A673 (cell line): ENCODE measurements at regions of chr7 and their contacts with region 1.

Region 1: DNA sequence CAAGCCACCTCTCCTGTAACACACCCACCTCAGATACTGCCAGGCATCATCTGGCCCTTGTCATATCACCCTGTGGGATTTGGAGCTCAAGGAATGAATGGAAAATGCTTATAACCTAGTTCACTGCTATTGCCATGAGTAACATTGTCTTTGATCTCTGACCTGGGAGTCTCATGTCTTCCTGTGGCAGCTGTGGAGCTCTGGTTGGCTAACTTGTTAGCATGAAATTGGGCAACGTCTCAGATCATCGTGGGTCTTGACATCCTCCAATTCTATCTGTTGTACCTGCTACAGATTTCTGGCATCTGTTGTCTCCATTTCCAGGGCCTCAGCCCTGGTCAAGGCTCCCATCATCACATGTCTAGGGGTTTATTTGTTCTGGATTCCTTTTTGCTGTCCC is 2.2 kb upstream of the TMEM270 start:
- DNase-seq: no peak
- H3K4me3 ChIP-seq: no peak overlapping the region
- H3K27ac ChIP-seq: no peak overlapping the region
- H3K4me1 ChIP-seq: no peaks in the 10 kb centered on the region
- H3K27me3 ChIP-seq: no peaks in the 10 kb centered on the region
- CTCF ChIP-seq: no peak

Region 2: GRCh38 chr7:73768642-73769535 is 89.9 kb before region 1 on chr7:
- CTCF ChIA-PET with region 1: no interaction called
- POLR2A ChIA-PET with region 1: no interaction called
- intact Hi-C with region 1: no loop called
- DNase-seq: no peak
- H3K4me3 ChIP-seq: no peak overlapping the region
- H3K27ac ChIP-seq: no peak overlapping the region
- H3K4me1 ChIP-seq: no peaks in the 10 kb centered on the region
- H3K27me3 ChIP-seq: peaks cover 25% of the 10 kb centered on the region
- CTCF ChIP-seq: no peak

Region 3: GRCh38 chr7:73779517-73779916 is 79.3 kb before region 1 on chr7:
- CTCF ChIA-PET with region 1: no interaction called
- POLR2A ChIA-PET with region 1: no interaction called
- intact Hi-C with region 1: no loop called
- DNase-seq: no peak
- H3K4me3 ChIP-seq: no peak overlapping the region
- H3K27ac ChIP-seq: no peak overlapping the region
- H3K4me1 ChIP-seq: no peaks in the 10 kb centered on the region
- H3K27me3 ChIP-seq: no peaks in the 10 kb centered on the region
- CTCF ChIP-seq: no peak

Region 4: DNA sequence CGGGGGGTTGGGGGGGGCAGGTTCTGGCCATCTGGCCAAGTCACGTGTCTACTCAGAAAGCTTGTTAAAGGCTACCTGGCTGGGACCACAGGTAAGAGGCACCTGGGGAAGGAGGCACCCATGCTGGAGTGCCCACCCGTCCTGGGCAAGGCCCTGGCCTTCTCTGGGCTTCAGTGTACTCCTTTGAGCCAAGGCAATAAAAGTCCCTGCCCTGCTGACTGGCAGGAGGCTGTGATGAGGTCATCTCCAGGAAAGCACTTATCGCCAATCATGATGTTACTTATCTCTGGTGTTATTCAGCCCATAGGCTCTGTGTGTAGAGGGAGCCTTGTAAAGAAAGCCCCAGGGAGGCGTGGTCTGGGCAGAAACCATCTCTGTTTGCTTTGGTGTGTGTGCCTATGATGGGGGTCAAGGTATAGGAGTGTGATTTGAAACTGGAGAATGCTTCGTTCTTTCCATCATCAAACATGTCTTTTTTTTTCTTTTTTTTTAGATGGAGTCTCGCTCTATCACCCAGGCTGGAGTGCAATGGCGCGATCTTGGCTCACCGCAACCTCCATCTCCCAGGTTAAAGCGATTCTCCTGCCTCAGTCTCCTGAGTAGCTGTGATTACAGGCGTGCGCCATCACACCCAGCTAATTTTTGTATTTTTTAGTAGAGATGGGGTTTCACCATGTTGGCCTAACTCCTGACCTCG is 30.6 kb before region 1 on chr7:
- CTCF ChIA-PET with region 1: no interaction called
- POLR2A ChIA-PET with region 1: no interaction called
- intact Hi-C with region 1: no loop called
- DNase-seq: peak; percentile 54
- H3K4me3 ChIP-seq: no peak overlapping the region
- H3K27ac ChIP-seq: no peak overlapping the region
- H3K4me1 ChIP-seq: no peaks in the 10 kb centered on the region
- H3K27me3 ChIP-seq: no peaks in the 10 kb centered on the region
- CTCF ChIP-seq: no peak

Region 5: GRCh38 chr7:73876973-73877372 is 18.2 kb after region 1 on chr7:
- CTCF ChIA-PET with region 1: no interaction called
- POLR2A ChIA-PET with region 1: no interaction called
- intact Hi-C with region 1: no loop called
- DNase-seq: no peak
- H3K4me3 ChIP-seq: no peak overlapping the region
- H3K27ac ChIP-seq: no peak overlapping the region
- H3K4me1 ChIP-seq: peaks cover 4% of the 10 kb centered on the region
- H3K27me3 ChIP-seq: peaks cover 16% of the 10 kb centered on the region
- CTCF ChIP-seq: no peak

Region 6: DNA sequence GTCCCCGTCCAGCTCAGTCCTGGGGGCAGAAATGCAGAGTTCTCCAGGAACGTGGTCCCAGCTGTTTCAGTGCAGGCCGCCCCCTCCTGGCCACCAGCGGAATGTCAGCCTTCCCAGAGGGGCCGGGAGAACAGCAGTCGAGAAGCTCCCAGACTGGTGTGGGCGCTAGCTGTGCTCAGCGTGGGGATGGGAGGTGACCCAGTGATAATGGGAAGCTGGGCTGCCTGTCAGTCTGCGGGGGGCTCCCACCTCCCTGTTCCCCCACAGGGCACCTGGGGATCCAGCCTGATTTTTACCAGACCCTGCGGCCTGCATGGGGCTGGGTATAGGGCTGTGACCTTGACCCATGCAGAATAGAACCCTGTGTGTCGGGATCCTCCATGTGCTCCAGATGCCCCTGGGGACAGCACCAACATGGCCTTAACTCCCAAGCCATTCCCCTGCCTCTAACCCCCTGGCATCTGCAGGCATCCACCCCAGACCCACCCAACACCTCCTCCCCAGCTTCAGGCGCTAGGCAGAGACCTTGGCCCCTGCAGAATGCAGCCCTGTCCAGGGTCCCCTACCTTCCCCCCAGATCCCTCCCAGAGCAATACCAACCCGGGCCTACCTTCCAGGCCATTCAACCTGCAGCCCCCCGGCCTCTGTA is 168.2 kb after region 1 on chr7:
- CTCF ChIA-PET with region 1: interaction called, 17 read pairs
- POLR2A ChIA-PET with region 1: no interaction called
- intact Hi-C with region 1: no loop called
- DNase-seq: peak; percentile 86
- H3K4me3 ChIP-seq: no peak overlapping the region
- H3K27ac ChIP-seq: peak overlapping the region; percentile 40
- H3K4me1 ChIP-seq: peaks cover 40% of the 10 kb centered on the region
- H3K27me3 ChIP-seq: no peaks in the 10 kb centered on the region
- CTCF ChIP-seq: peak; percentile 98